ENCODE measurements at regions of chr3 and their contacts with region 1.

Region 1: GRCh38 chr3:32510075-32510724 is 7.5 kb upstream of the CMTM6 start:
- DNase-seq: peak; percentile 39
- ATAC-seq: peak; percentile 97
- H3K4me3 ChIP-seq: no peak overlapping the region
- H3K27ac ChIP-seq: no peak overlapping the region
- H3K4me1 ChIP-seq: no peaks in the 10 kb centered on the region
- H3K27me3 ChIP-seq: no peaks in the 10 kb centered on the region
- CTCF ChIP-seq: peak; percentile 67 to 87 (median 86)
- POLR2A ChIP-seq: no peak
- RAD21 ChIP-seq: peak; percentile 97

Region 2: GRCh38 chr3:32018757-32019564 is 491.2 kb before region 1 on chr3:
- CTCF ChIA-PET with region 1: no interaction called
- POLR2A ChIA-PET with region 1: no interaction called
- RAD21 ChIA-PET with region 1: no interaction called
- intact Hi-C with region 1: no loop called
- DNase-seq: peak; percentile 54
- ATAC-seq: peak; percentile 94
- H3K4me3 ChIP-seq: no peak overlapping the region
- H3K27ac ChIP-seq: no peak overlapping the region
- H3K4me1 ChIP-seq: no peaks in the 10 kb centered on the region
- H3K27me3 ChIP-seq: no peaks in the 10 kb centered on the region
- CTCF ChIP-seq: peak; percentile 66 to 86 (median 79)
- POLR2A ChIP-seq: no peak
- RAD21 ChIP-seq: peak; percentile 86

Region 3: GRCh38 chr3:32667122-32667521 is 156.9 kb after region 1 on chr3:
- CTCF ChIA-PET with region 1: interaction called, 8 read pairs
- POLR2A ChIA-PET with region 1: no interaction called
- RAD21 ChIA-PET with region 1: no interaction called
- intact Hi-C with region 1: loop called (anchors 1 kb)
- DNase-seq: no peak
- ATAC-seq: no peak
- H3K4me3 ChIP-seq: no peak overlapping the region
- H3K27ac ChIP-seq: no peak overlapping the region
- H3K4me1 ChIP-seq: no peaks in the 10 kb centered on the region
- H3K27me3 ChIP-seq: peaks cover 3% of the 10 kb centered on the region; the same call in 1 of the 2 replicates
- CTCF ChIP-seq: no peak
- POLR2A ChIP-seq: no peak
- RAD21 ChIP-seq: no peak

Region 4: GRCh38 chr3:32781210-32781968 is 271.2 kb after region 1 on chr3:
- CTCF ChIA-PET with region 1: no interaction called
- POLR2A ChIA-PET with region 1: no interaction called
- RAD21 ChIA-PET with region 1: no interaction called
- intact Hi-C with region 1: no loop called
- DNase-seq: peak; percentile 83
- ATAC-seq: peak; percentile 91
- H3K4me3 ChIP-seq: peak overlapping the region; percentile 58 to 61
- H3K27ac ChIP-seq: peak overlapping the region; percentile 46
- H3K4me1 ChIP-seq: peaks cover 4 to 12% of the 10 kb centered on the region in 2 experiments; a peak in 3 of 4 replicates
- H3K27me3 ChIP-seq: no peaks in the 10 kb centered on the region
- CTCF ChIP-seq: peak; percentile 70 to 85 (median 84)
- POLR2A ChIP-seq: no peak
- RAD21 ChIP-seq: peak; percentile 66

Region 5: GRCh38 chr3:32934150-32934742 is 424.0 kb after region 1 on chr3:
- CTCF ChIA-PET with region 1: no interaction called
- POLR2A ChIA-PET with region 1: no interaction called
- RAD21 ChIA-PET with region 1: no interaction called
- intact Hi-C with region 1: loop called (anchors 2 kb)
- DNase-seq: peak; percentile 12
- ATAC-seq: peak; percentile 50; the same call in 1 of the 2 replicates
- H3K4me3 ChIP-seq: no peak overlapping the region
- H3K27ac ChIP-seq: no peak overlapping the region
- H3K4me1 ChIP-seq: no peaks in the 10 kb centered on the region
- H3K27me3 ChIP-seq: no peaks in the 10 kb centered on the region
- CTCF ChIP-seq: peak; percentile 67 to 77 (median 72)
- POLR2A ChIP-seq: no peak
- RAD21 ChIP-seq: peak; percentile 82

Measured in HCT116 (cell line).